Sciatic nerve (tissue), 2 donors: ENCODE measurements at regions of chr17 and their contacts with region 1.

Region 1: GRCh38 chr17:66715745-66716156 is 119.2 kb upstream of the CACNG5 start:
- DNase-seq: no peak
- ATAC-seq: peak; percentile 33

Region 2: DNA sequence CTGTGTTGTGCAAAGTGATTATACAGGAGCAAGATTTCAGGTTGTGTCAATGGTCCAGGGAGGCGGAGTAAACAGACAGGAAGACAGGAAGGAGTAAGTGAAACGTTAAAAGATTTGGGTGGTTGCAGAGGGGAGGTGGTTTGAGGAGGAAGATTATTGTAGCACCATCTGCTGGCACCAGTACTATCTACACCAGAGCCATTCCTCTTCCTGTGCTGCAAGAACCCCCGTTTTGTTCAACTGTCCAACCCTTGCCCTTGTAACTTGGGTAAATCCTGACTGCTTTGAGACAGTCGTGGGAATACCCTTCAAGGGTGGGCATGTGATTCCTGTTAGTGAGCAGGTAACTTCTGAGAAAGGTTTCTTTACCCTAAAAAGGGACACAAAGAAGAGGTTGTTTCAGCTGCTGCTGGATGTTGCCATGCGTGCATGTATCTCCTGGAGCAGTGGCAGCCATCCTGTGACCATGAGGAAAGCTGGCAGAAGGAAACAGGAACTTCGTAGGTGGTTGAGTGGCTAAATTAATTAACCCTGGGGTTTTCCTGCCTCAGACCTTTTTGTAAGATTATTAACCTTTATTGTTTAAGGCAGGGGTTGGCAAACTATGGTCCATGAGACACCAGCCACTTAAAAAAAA is 289.2 kb before region 1 on chr17:
- intact Hi-C with region 1: no loop called
- DNase-seq: no peak
- ATAC-seq: no peak

Region 3: GRCh38 chr17:66667491-66668030 is 48.2 kb before region 1 on chr17:
- intact Hi-C with region 1: no loop called
- DNase-seq: no peak
- ATAC-seq: no peak

Region 4: GRCh38 chr17:66906321-66907278 is 190.8 kb after region 1 on chr17:
- intact Hi-C with region 1: loop called (anchors 10 kb)
- DNase-seq: peak; percentile 89
- ATAC-seq: peak; percentile 44

Region 5: DNA sequence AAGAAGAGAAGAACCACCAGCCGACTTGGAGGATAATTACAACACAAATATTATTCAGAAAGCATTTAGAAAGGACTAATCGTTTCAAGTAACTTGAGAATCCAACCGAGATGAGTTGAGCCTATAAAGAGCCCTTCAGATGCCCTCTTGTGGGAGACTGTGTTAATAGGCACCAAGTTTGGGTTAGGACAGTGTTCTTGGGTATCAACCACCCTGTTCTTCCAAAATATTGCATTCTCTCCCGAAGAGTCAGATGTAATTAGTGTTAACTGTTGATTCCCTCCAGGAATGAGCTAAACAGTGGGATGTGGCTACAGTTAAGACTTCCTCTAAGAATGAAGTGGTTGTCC is 914.2 kb after region 1 on chr17:
- intact Hi-C with region 1: no loop called
- DNase-seq: no peak
- ATAC-seq: peak; percentile 80